Activated CD8-positive, alpha-beta memory T cell treated with anti-CD3 and anti-CD28 coated beads, Interleukin-2, amount 10 ng/mL, durations not matched to agents 7 days and 5 days (primary cell): ENCODE measurements at regions of chr14 and their contacts with region 1.

Region 1: DNA sequence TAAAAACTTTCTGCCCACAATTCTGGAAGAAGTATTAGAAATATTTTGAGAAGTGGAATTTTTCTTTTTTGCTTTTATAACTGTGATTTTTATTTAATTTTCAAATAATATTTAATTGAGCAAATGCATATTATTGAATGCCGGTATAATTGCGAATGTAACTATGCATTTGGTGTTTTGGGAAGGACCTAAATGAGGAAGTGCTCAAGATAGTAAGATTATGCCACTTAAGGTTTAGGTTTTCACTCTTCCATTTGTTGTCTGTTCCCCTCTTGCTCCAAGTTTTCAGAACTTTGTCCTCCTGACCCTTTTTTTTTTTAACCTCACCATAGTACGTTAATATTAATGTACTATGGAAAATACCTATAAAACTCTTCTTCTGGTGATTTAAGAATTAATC is 85.8 kb downstream of the KIAA0586 start:
- DNase-seq: no peak
- ATAC-seq: no peak
- H3K4me3 Mint-ChIP-seq: no peak overlapping the region
- H3K27ac Mint-ChIP-seq: no peak overlapping the region
- H3K4me1 Mint-ChIP-seq: no peaks in the 10 kb centered on the region
- H3K27me3 Mint-ChIP-seq: no peaks in the 10 kb centered on the region

Region 2: GRCh38 chr14:58501214-58501816 is 12.0 kb before region 1 on chr14:
- CTCF ChIA-PET with region 1: interaction called, 13 read pairs
- DNase-seq: no peak
- ATAC-seq: peak; percentile 75
- H3K4me3 Mint-ChIP-seq: no peak overlapping the region
- H3K27ac Mint-ChIP-seq: no peak overlapping the region
- H3K4me1 Mint-ChIP-seq: no peaks in the 10 kb centered on the region
- H3K27me3 Mint-ChIP-seq: no peaks in the 10 kb centered on the region

Region 3: GRCh38 chr14:58533446-58533845 is 20.2 kb after region 1 on chr14:
- CTCF ChIA-PET with region 1: no interaction called
- DNase-seq: no peak
- ATAC-seq: no peak
- H3K4me3 Mint-ChIP-seq: no peak overlapping the region
- H3K27ac Mint-ChIP-seq: no peak overlapping the region
- H3K4me1 Mint-ChIP-seq: no peaks in the 10 kb centered on the region
- H3K27me3 Mint-ChIP-seq: no peaks in the 10 kb centered on the region

Region 4: GRCh38 chr14:58587271-58587670 is 74.0 kb after region 1 on chr14:
- CTCF ChIA-PET with region 1: no interaction called
- DNase-seq: no peak
- ATAC-seq: no peak
- H3K4me3 Mint-ChIP-seq: no peak overlapping the region
- H3K27ac Mint-ChIP-seq: no peak overlapping the region
- H3K4me1 Mint-ChIP-seq: no peaks in the 10 kb centered on the region
- H3K27me3 Mint-ChIP-seq: peaks cover 10% of the 10 kb centered on the region

Region 5: GRCh38 chr14:58607946-58608306 is 94.7 kb after region 1 on chr14:
- CTCF ChIA-PET with region 1: no interaction called
- DNase-seq: no peak
- ATAC-seq: no peak
- H3K4me3 Mint-ChIP-seq: no peak overlapping the region
- H3K27ac Mint-ChIP-seq: no peak overlapping the region
- H3K4me1 Mint-ChIP-seq: no peaks in the 10 kb centered on the region
- H3K27me3 Mint-ChIP-seq: peaks cover 11% of the 10 kb centered on the region